Endothelial cell of umbilical vein (primary cell): ENCODE measurements at regions of chr13 and their contacts with region 1.

Region 1: DNA sequence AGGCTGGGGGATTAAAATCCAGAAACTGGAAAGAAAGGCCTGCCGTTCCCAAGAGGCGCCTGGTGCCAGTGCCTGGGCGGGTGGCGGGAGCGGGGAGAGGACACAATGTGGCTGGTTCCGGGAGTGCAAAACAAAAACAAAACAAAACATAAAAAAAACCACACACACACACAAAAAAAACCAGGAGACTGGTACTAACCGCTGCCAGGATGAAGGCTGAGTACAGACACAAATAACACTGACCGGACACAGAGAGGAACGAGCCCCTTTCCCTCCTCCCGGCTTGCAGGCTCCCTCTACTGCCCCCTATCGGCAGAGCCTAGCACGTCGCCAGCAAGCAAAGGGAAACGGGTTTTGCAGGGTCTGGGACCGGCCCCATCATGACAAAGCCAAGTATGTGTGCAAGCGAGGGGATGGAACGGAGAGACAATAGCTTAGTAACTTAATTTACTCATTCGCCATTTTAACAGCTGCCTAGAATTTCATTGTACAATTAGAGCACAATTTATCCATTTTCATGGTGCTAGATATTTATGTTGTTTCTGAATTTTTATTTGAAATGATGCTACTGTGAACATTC is 17.9 kb upstream of the ZDHHC20 start:
- DNase-seq: peak; percentile 75
- H3K4me3 ChIP-seq: peak overlapping the region in 2 of 3 experiments; percentile 3 to 26
- H3K27ac ChIP-seq: no peak overlapping the region
- H3K4me1 ChIP-seq: peaks cover 2% of the 10 kb centered on the region
- H3K27me3 ChIP-seq: no peaks in the 10 kb centered on the region
- CTCF ChIP-seq: peak; percentile 93 to 99
- POLR2A ChIP-seq: no peak

Region 2: DNA sequence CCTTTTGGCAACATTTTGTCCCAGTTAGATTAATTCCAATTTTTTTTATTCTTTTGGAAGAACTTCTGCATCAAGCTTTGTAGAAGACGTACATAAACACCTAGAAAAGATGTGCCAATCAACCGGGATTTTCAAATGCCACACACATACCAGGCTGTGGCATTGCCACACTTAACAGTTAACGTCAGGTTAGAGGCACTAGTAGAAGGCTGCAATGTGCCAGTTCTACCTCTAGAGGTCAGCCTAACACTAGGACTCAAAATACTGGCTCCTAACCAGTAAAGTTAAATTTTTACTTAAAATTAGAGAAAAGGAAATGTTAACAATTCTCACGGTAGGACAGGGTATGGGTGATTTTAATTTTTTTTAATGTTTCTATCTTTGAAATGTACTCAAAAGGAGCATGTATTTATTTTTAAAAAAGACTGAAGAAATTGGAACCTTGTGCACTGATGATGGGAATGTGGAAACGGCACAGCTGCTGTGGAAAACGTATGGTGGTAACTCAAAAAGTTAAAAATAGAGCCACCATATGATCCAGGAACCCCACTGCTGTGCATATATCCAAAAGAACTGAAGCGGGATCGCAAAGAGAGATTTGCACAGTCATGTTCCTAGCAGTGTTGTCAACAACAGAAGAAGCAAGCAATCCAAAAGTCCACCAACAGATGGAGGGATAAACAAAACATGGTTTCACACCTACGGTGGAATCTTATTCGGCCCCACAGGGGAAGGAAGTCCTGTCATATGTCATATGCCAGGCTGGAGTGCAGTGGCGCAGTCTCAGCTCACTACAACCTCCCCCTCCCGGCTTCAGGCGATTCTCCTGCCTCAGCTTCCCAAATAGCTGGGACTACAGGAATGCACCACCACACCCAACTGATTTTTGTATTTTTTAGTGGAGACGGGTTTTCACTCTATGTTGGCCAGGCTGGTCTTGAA is 981.6 kb before region 1 on chr13:
- CTCF ChIA-PET with region 1: no interaction called
- POLR2A ChIA-PET with region 1: no interaction called
- dilution Hi-C with region 1: no loop called
- intact Hi-C with region 1: loop called (anchors 10 kb)
- DNase-seq: peak; percentile 76
- H3K4me3 ChIP-seq: no peak overlapping the region
- H3K27ac ChIP-seq: peak overlapping the region; percentile 34
- H3K4me1 ChIP-seq: peaks cover 4% of the 10 kb centered on the region
- H3K27me3 ChIP-seq: no peaks in the 10 kb centered on the region
- CTCF ChIP-seq: peak; percentile 73
- POLR2A ChIP-seq: no peak

Region 3: DNA sequence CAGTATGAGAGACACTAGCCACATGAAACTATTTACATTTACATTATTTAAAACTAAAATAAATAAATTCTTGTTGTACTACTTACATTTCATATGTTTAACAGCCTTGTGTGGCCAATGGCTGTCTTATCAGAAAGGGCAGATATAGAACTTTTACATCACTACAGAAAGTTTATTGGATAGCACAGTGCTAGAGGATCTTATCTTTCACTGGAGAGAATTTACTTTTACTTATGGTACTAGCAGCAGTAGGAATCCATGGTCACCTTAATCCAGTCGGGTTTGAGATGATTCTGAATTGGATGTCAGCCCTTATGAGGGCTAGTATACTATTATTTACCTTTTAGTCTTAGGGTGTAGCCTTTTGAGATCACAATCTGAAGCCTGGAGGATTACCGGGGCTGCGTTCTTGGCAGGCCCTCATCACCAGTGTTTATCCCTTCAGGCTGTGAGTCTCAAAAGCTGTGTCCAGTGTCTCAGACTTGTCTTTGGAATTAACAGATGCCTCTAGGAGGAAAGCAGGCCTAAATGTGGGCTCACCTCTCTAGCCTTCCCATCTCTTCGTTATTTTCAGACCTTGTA is 888.4 kb before region 1 on chr13:
- CTCF ChIA-PET with region 1: no interaction called
- POLR2A ChIA-PET with region 1: no interaction called
- dilution Hi-C with region 1: no loop called
- intact Hi-C with region 1: no loop called
- DNase-seq: no peak
- H3K4me3 ChIP-seq: no peak overlapping the region
- H3K27ac ChIP-seq: no peak overlapping the region
- H3K4me1 ChIP-seq: no peaks in the 10 kb centered on the region
- H3K27me3 ChIP-seq: no peaks in the 10 kb centered on the region
- CTCF ChIP-seq: no peak
- POLR2A ChIP-seq: no peak

Region 4: GRCh38 chr13:21034603-21035191 is 442.3 kb before region 1 on chr13:
- CTCF ChIA-PET with region 1: no interaction called
- POLR2A ChIA-PET with region 1: no interaction called
- dilution Hi-C with region 1: no loop called
- intact Hi-C with region 1: loop called (anchors 5 kb)
- DNase-seq: peak; percentile 71
- H3K4me3 ChIP-seq: no peak overlapping the region
- H3K27ac ChIP-seq: peak overlapping the region; percentile 12
- H3K4me1 ChIP-seq: peaks cover 66% of the 10 kb centered on the region
- H3K27me3 ChIP-seq: no peaks in the 10 kb centered on the region
- CTCF ChIP-seq: peak; percentile 23 to 54
- POLR2A ChIP-seq: no peak

Region 5: DNA sequence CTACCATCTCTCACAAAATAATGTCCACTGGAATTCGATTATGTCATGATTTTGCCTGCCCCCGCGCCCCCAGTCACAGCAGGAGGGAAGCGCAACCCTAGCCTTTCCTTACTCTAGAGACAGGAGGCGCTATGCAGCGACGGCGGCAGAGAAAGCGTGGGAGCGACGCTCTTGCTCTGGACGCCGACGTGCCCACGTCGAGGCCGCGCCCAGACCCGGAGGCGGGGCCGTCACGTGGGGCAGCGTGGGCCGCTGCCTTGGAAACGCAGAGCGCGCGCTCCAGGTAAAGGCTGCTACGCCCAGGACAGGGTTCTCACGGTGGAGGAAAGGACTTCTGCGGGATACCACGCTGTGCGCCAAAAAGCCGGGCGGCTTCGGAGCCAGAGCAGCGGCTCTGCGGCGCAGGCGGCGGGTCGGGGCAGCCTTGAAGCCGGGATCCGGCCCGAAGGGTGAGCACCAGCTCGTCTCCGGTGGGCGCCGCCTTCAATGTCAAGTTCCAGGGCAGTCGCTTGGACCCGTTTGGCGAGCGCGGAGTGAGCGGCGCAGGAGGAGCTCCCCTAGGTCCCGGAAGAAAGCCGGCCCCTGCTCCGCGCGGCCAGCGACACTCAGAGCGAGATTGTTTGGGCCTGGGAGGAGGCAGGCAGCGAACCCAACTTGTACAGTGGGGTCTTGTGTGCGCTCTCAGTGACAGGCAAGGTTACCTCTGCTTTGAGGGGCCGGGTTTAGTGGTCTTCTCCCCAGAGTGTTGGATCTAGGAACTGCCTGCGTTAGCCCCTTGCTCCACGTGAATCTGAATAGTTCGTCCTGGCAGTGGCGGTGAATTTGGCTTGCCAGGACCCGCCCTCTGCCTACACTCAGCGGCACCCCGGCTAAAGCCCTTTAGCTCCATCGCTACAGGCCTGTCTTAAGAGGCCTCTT is 178.8 kb before region 1 on chr13:
- CTCF ChIA-PET with region 1: interaction called, 44 read pairs
- POLR2A ChIA-PET with region 1: no interaction called
- dilution Hi-C with region 1: no loop called
- intact Hi-C with region 1: loop called (anchors 1 kb)
- DNase-seq: peak; percentile 90
- H3K4me3 ChIP-seq: peak overlapping the region; percentile 54 to 81 (median 70)
- H3K27ac ChIP-seq: no peak overlapping the region
- H3K4me1 ChIP-seq: peaks cover 12% of the 10 kb centered on the region
- H3K27me3 ChIP-seq: no peaks in the 10 kb centered on the region
- CTCF ChIP-seq: peak; percentile 89 to 90
- POLR2A ChIP-seq: peak; percentile 16

Region 6: DNA sequence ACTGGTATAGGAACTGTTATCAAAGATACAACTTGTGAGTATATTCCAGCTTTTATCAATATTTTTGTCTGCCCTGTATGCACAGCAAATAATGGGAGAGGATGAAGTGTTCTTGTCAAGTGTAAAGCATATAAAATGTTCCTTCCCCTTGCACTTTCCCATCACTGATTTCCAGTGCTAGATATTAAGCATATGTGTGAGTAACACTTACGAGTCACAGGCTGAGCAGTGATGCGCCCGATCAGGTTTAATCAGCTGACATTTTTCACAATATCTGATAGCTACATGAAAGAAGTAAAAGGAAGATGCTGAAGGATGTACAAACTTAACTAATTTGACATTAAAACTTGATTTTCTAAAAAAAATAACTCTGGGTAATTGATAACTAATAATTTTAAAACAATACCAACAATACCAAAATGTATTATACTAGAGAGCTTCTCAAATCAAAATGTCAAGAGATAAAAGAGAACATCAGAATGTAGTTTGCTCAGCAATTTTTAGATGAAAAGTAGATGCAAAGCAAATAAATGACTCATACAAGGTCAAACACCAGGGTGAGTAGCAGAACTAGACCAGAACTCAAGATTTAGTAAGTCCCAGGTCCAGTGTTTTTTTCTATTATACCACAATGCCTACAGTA is 74.3 kb before region 1 on chr13:
- CTCF ChIA-PET with region 1: interaction called, 7 read pairs
- POLR2A ChIA-PET with region 1: no interaction called
- dilution Hi-C with region 1: no loop called
- intact Hi-C with region 1: loop called (anchors 2 kb)
- DNase-seq: peak; percentile 16
- H3K4me3 ChIP-seq: no peak overlapping the region
- H3K27ac ChIP-seq: no peak overlapping the region
- H3K4me1 ChIP-seq: peaks cover 28% of the 10 kb centered on the region
- H3K27me3 ChIP-seq: no peaks in the 10 kb centered on the region
- CTCF ChIP-seq: no peak
- POLR2A ChIP-seq: no peak

Region 7: DNA sequence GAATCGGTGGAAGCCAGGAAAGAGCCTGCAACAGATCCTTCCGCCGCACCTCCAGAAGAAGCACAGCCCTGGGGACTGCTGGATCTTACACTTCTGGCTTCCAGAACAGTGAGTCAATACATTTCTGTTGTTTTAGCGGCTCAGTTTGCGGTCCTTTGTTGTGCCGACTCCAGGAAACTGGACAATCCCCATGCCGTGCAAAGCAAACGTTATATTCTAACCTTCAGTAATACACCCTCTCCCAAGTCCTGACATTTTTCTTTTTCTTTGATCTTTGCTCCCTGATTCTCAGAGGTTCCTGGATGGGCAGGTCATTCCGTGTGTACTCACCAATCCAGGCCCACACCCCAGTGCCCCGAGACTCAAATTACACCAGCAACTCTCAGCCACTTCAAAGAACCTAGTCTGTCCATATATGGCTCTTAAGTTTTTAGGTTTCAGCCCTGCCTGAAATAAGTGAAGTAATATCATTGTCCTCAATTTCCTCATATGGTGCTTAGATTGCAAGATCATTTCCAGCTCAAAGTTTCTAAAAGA is 1316.7 kb after region 1 on chr13:
- CTCF ChIA-PET with region 1: interaction called, 4 read pairs
- POLR2A ChIA-PET with region 1: no interaction called
- dilution Hi-C with region 1: no loop called
- intact Hi-C with region 1: loop called (anchors 10 kb)
- DNase-seq: no peak
- H3K4me3 ChIP-seq: no peak overlapping the region
- H3K27ac ChIP-seq: no peak overlapping the region
- H3K4me1 ChIP-seq: no peaks in the 10 kb centered on the region
- H3K27me3 ChIP-seq: no peaks in the 10 kb centered on the region
- CTCF ChIP-seq: no peak
- POLR2A ChIP-seq: no peak